HCT116 (cell line): ENCODE measurements at regions of chr10 and their contacts with region 1.

Region 1: GRCh38 chr10:115572706-115573455 is 479.7 kb downstream of the ATRNL1 start:
- DNase-seq: peak; percentile 7
- ATAC-seq: peak; percentile 96
- H3K4me3 ChIP-seq: no peak overlapping the region
- H3K27ac ChIP-seq: no peak overlapping the region
- H3K4me1 ChIP-seq: no peaks in the 10 kb centered on the region
- H3K27me3 ChIP-seq: peaks cover under 1% of the 10 kb centered on the region; the same call in 1 of the 2 replicates
- CTCF ChIP-seq: peak; percentile 24 to 79 (median 78); a peak in 5 of 6 replicates
- POLR2A ChIP-seq: no peak
- RAD21 ChIP-seq: peak; percentile 41

Region 2: GRCh38 chr10:115141254-115141653 is 431.6 kb before region 1 on chr10:
- CTCF ChIA-PET with region 1: no interaction called
- POLR2A ChIA-PET with region 1: no interaction called
- RAD21 ChIA-PET with region 1: no interaction called
- intact Hi-C with region 1: loop called (anchors 1 kb)
- DNase-seq: peak; percentile 15
- ATAC-seq: no peak
- H3K4me3 ChIP-seq: no peak overlapping the region
- H3K27ac ChIP-seq: no peak overlapping the region
- H3K4me1 ChIP-seq: no peaks in the 10 kb centered on the region
- H3K27me3 ChIP-seq: peaks cover 36% of the 10 kb centered on the region
- CTCF ChIP-seq: peak; percentile 50 to 70 (median 58); a peak in 4 of 6 replicates
- POLR2A ChIP-seq: no peak
- RAD21 ChIP-seq: peak; percentile 72

Region 3: DNA sequence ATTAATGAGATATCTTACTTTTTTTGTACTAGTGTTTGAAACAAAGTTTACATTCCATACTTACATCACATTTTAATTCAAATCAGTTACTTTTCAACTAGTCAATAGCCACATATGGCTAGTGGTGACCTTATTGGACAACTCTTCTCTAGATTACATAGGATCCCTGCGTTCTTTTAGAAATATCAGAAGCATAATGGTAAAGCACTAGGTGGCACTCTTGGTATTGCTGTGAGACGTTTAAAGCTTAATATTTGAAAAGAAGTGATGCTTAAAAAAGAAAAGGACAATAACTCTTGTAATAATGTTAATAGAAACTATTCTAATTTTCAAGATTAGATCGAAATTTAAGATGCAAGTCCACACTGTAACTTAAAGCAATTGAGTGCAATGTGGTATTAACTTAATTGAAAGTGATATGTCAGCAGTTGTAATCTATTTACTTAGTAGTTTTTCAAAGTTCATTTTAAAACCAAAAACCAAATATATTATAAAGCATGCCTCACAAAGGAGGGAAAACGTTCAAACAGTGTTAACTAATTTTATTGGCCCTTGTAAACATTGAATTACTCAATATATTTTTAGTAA is 140.6 kb before region 1 on chr10:
- CTCF ChIA-PET with region 1: interaction called, 4 read pairs
- POLR2A ChIA-PET with region 1: no interaction called
- RAD21 ChIA-PET with region 1: interaction called in 1 of 2 experiments, 3 read pairs
- intact Hi-C with region 1: loop called (anchors 1 kb)
- DNase-seq: peak; percentile 26
- ATAC-seq: peak; percentile 87
- H3K4me3 ChIP-seq: no peak overlapping the region
- H3K27ac ChIP-seq: no peak overlapping the region
- H3K4me1 ChIP-seq: no peaks in the 10 kb centered on the region
- H3K27me3 ChIP-seq: peaks cover 5% of the 10 kb centered on the region; the same call in 1 of the 2 replicates
- CTCF ChIP-seq: peak; percentile 52 to 73 (median 62); a peak in 5 of 6 replicates
- POLR2A ChIP-seq: no peak
- RAD21 ChIP-seq: peak; percentile 77